ENCODE measurements at regions of chr20 and their contacts with region 1.

Region 1: DNA sequence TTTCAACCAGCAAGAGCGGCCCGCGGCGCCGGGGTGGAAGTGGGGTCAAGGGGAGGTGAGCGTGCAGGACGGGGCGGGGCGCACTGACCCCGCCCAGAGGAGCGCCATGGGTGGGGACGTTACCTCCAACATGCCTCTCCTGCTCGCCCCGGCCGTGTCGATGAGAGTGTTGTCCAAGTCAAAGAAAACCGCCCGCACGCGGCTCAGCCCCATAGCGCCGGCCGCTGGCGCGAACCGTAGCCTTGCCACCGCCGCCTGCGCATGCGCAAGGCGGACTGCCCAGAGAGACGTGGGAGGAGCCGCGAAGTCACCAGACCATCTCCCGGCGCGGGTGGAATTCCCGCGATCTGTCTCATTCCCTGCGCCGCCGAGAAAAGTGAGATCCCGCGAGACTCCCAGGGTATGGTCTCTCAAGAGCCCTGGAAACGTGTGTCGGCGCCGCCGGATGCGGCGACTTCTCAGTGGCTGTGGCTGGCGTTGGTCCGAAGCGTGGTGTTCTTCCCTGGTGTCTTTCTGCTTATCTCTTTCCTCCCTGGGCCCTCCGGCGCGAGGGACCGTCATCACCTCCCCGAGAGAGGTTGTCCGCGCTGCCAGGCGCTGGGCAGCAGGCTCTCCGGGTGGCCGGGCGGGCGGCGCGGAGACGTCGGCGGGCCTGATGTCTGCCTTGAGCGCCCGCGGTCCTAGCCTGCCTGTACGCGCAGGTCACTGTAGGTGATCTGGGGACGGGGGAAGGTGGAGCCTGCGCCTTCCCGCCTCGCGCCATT is at the start of gene NANP:
- DNase-seq: peak; percentile 99
- H3K4me3 ChIP-seq: peak within 1 kb of the TSS; percentile 55 to 85 (median 82)
- H3K27ac ChIP-seq: peak within 1 kb of the TSS; percentile 91
- H3K4me1 ChIP-seq: peaks cover 11% of the 10 kb centered on the region
- H3K27me3 ChIP-seq: no peaks in the 10 kb centered on the region
- CTCF ChIP-seq: no peak
- POLR2A ChIP-seq: peak; percentile 97
- total RNA-seq, gene NANP: 7.5 and 8.0 TPM in 2 replicates

Region 2: GRCh38 chr20:25539742-25540672 is 83.9 kb before region 1 on chr20:
- CTCF ChIA-PET with region 1: no interaction called
- POLR2A ChIA-PET with region 1: no interaction called
- dilution Hi-C with region 1: no loop called
- intact Hi-C with region 1: no loop called
- DNase-seq: no peak
- H3K4me3 ChIP-seq: no peak overlapping the region
- H3K27ac ChIP-seq: no peak overlapping the region
- H3K4me1 ChIP-seq: no peaks in the 10 kb centered on the region
- H3K27me3 ChIP-seq: no peaks in the 10 kb centered on the region
- CTCF ChIP-seq: peak in 1 of 2 donors; percentile 31
- POLR2A ChIP-seq: no peak

Region 3: DNA sequence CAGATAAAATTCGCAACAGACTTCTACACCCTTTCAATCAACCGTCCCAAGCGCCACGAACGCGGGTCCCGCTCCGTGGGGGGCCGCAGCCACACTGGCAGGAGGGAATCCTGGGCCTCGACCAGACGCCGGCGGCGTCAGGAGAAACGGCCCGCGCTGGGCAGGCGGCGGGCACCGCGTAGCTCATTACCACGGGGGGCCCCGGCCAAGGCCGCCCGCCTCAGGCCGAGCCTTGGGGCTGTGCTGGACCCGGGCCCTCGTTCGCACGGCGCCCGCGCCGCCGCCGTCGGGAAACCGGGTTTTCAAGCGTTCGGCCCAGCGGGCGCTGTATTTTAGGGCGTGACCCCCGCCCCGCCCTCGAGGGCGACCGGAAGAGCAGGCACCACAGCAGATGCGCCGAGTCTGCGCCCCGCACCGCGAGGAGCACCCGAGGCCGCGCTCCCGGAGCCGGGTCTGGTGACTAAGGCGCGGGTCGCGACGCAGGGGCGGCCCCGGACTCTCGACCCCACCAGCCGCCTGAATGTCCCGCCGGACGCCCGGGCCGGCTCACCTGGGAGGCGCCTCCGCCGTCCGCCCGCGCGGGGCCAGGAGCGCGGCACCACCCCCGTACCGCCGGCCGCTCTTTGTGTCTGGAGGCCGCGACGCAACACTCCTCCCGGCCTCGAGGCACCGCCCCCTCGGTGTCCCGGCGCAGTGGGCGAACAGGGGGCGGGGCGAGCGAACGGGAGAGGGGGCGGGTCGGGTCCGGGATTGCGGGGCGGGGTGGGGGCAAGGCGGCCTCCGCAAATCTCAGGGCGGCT is 38.8 kb before region 1 on chr20 and contains the start of gene NINL:
- CTCF ChIA-PET with region 1: no interaction called
- POLR2A ChIA-PET with region 1: no interaction called
- dilution Hi-C with region 1: no loop called
- intact Hi-C with region 1: loop called (anchors 1 kb)
- DNase-seq: peak; percentile 67
- H3K4me3 ChIP-seq: peak within 1 kb of the TSS; percentile 1 to 81 (median 31)
- H3K27ac ChIP-seq: peak within 1 kb of the TSS; percentile 0
- H3K4me1 ChIP-seq: peaks cover 4% of the 10 kb centered on the region
- H3K27me3 ChIP-seq: no peaks in the 10 kb centered on the region
- CTCF ChIP-seq: no peak
- POLR2A ChIP-seq: peak; percentile 79
- total RNA-seq, gene NINL: 24.8 and 25.5 TPM in 2 replicates

Region 4: DNA sequence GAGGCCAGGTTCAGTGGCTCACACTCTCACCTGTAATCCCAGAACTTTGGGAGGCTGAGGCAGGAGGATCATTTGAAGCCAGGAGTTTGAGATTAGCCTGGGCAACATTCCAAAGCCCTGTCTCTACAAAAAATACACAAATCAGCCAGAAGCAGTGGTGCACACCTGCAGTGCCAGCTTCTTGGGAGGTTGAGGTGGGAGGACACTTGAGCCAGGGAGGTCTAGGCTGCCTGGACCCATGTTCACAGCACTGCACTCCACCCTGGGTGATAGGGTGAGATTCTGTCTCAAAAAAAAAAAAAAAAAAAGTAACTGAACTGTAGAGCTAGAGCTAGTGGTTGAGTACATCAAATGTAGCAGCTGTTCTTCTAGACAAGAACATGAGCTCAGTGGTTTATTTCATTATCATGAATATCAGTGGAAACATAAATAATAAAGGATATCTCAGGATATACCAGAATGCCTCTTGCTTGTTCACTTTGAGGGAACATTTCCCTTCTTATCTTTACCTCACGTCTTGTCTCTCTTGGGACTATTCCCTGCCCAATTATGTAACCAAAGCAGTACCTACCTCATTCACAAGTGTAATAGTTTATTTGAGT is 17.7 kb before region 1 on chr20:
- CTCF ChIA-PET with region 1: no interaction called
- POLR2A ChIA-PET with region 1: no interaction called
- dilution Hi-C with region 1: no loop called
- intact Hi-C with region 1: no loop called
- DNase-seq: no peak
- H3K4me3 ChIP-seq: no peak overlapping the region
- H3K27ac ChIP-seq: no peak overlapping the region
- H3K4me1 ChIP-seq: no peaks in the 10 kb centered on the region
- H3K27me3 ChIP-seq: no peaks in the 10 kb centered on the region
- CTCF ChIP-seq: no peak
- POLR2A ChIP-seq: no peak

Region 5: DNA sequence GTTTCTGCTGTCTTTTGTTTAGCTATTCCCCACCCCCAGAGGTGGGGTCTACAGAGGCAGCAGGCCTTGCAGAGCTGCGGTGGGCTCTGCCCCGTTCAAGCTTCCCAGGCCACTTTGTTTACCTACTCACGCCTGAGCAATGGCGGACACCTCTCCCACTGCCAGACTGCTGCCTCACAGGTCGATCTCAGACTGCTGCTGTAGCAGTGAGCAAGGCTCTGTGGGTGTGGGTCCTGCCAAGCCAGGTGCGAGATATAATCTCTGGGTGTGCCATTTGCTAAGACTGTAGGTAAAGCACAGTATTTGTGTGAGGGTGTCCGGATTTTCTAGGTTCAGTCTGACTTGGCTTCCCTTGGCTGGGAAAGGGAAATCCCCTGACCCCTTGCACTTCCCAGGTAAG is 96.4 kb after region 1 on chr20:
- CTCF ChIA-PET with region 1: no interaction called
- POLR2A ChIA-PET with region 1: no interaction called
- dilution Hi-C with region 1: no loop called
- intact Hi-C with region 1: no loop called
- DNase-seq: no peak
- H3K4me3 ChIP-seq: no peak overlapping the region
- H3K27ac ChIP-seq: no peak overlapping the region
- H3K4me1 ChIP-seq: no peaks in the 10 kb centered on the region
- H3K27me3 ChIP-seq: no peaks in the 10 kb centered on the region
- CTCF ChIP-seq: no peak
- POLR2A ChIP-seq: no peak

Measured in endothelial cell of umbilical vein (primary cell).